Activated CD4-positive, alpha-beta T cell treated with anti-CD3 and anti-CD28 coated beads, Interleukin-2, amount 10 ng/mL, durations not matched to agents 24 days and 14 days (primary cell): ENCODE measurements at regions of chr4 and their contacts with region 1.

Region 1: DNA sequence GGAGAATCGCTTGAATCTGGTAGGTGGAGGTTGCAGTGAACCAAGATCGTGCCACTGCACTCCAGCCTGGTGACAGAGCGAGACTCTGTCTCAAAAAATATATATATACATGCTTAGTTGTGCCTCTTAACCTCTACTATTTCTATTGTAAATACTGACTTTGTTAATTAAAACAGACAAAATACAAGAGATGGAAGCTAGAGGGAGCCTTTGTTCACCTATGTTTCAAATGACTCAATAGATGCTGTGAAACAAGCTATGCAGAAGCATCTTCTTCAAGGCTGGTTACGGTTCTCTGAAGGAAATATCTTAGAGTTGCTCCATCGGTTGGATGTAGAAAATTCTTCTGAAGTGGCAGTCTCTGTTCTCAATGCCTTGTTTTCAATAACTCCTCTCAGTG is 6.2 kb downstream of the NCAPG start:
- DNase-seq: peak; percentile 70
- H3K4me3 Mint-ChIP-seq: peak overlapping the region; percentile 73
- H3K27ac Mint-ChIP-seq: peak overlapping the region; percentile 62
- H3K4me1 Mint-ChIP-seq: peaks cover 46% of the 10 kb centered on the region
- H3K27me3 Mint-ChIP-seq: no peaks in the 10 kb centered on the region

Region 2: DNA sequence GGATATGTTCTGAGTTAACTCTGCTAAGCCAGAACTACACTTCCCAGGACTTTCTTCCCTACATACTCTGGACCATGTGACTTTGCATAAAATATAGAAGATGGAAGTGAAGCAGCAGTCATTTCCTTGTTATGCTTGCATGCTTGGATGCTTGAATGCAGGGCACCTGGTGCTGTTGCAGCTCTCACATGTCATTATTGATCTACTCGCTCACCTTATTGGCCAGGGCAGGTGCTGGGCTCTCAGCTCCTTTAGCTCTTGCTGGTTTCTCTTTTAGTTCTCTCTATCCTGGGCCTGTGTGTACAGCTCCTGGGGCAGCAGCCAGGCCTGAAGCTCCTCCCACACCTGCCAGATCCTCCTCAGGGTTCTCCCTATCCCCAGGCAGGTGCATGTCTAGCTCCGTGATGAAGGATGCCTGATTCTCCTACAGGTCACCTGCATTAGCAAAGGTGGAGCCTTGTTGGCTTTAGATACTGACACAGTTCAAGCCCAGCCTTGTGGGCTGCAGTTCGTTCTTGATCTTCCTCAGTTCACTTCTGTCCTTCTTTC is 149.3 kb before region 1 on chr4:
- intact Hi-C with region 1: no loop called
- DNase-seq: no peak
- H3K4me3 Mint-ChIP-seq: no peak overlapping the region
- H3K27ac Mint-ChIP-seq: no peak overlapping the region
- H3K4me1 Mint-ChIP-seq: no peaks in the 10 kb centered on the region
- H3K27me3 Mint-ChIP-seq: peaks cover 15% of the 10 kb centered on the region

Region 3: GRCh38 chr4:18366892-18367291 is 549.9 kb after region 1 on chr4:
- intact Hi-C with region 1: loop called (anchors 1 kb)
- DNase-seq: peak; percentile 60
- H3K4me3 Mint-ChIP-seq: no peak overlapping the region
- H3K27ac Mint-ChIP-seq: no peak overlapping the region
- H3K4me1 Mint-ChIP-seq: no peaks in the 10 kb centered on the region
- H3K27me3 Mint-ChIP-seq: no peaks in the 10 kb centered on the region